Transverse colon (tissue), 4 donors: ENCODE measurements at regions of chr15 and their contacts with region 1.

Region 1: GRCh38 chr15:43230640-43231115 is 9.9 kb upstream of the EPB42 start:
- DNase-seq: no peak
- H3K4me3 ChIP-seq: no peak overlapping the region
- H3K27ac ChIP-seq: no peak overlapping the region
- H3K4me1 ChIP-seq: no peaks in the 10 kb centered on the region
- H3K27me3 ChIP-seq: no peaks in the 10 kb centered on the region
- CTCF ChIP-seq: no peak
- EP300 ChIP-seq: no peak
- POLR2A ChIP-seq: no peak

Region 2: DNA sequence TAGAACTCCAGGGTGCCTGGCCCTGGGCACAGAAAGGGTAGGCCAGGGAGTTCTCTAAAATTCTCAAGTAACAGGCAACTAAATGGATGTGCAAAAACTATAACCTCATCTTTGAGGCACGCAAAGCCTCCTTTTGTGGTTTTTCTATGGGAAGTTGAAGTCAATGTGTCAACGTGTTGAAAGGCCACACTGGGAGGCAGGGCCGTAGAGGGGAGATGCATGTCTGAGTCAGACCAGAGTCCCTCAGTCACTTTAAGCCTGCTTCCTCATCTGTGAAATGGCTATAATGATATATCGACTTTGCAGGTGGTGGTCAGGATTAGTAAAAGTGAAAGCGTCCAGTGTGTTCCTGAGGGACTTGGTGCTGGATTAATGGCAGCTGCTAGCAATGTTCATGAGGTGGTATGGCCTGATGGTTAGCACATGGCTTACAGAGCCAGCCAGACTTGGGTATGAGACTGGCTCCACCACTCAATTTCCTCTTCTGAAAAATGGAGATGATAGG is 19.1 kb after region 1 on chr15:
- in situ Hi-C with region 1: no loop called
- intact Hi-C with region 1: loop called (anchors 2 kb)
- DNase-seq: no peak
- H3K4me3 ChIP-seq: no peak overlapping the region
- H3K27ac ChIP-seq: no peak overlapping the region
- H3K4me1 ChIP-seq: no peaks in the 10 kb centered on the region
- H3K27me3 ChIP-seq: no peaks in the 10 kb centered on the region
- CTCF ChIP-seq: no peak
- EP300 ChIP-seq: no peak
- POLR2A ChIP-seq: no peak